ENCODE measurements at regions of chr3 and their contacts with region 1.

Region 1: DNA sequence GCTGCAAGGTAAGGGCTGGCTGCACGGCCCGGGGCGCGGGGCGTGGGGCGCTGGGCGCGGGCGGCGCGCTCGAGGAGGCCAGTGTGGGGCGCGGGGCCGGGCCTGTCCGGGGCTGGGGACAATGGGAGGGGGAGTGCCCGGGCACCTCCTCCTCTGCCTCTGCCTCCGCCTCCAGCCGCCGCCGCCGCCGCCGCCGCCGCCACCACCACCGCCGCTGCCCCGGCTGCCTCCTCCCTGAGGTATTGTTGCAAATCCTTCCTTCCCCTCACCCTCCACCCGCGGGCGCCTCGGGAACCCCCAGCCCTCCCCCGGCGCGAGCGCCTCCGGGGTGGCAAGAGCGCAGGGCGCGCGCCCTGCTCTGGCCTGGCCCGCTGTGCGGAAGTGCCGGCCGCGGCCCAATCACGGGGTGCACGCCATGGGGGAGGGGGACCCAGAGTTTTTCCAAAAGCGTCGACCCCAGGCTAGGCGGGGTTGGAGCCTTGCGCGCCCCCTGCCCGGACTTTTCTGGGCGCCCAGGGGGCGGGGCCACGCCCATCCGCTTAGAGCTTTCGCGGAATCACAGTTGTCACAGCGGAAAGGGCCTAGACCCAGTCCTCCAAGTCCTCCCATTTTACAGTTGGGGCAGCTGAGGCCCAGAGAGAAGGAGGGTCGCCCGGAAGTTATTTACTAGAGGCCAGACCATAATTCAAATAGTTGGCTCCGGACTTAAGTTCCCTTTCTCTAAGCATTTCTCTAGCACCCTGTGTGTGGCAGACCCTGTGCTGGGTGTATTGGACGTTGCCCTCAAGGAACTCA is at the start of gene LPP:
- DNase-seq: peak; percentile 96
- total RNA-seq, gene LPP: 145 TPM

Region 2: GRCh38 chr3:187694801-187695200 is 459.4 kb before region 1 on chr3:
- intact Hi-C with region 1: no loop called
- DNase-seq: no peak

Region 3: DNA sequence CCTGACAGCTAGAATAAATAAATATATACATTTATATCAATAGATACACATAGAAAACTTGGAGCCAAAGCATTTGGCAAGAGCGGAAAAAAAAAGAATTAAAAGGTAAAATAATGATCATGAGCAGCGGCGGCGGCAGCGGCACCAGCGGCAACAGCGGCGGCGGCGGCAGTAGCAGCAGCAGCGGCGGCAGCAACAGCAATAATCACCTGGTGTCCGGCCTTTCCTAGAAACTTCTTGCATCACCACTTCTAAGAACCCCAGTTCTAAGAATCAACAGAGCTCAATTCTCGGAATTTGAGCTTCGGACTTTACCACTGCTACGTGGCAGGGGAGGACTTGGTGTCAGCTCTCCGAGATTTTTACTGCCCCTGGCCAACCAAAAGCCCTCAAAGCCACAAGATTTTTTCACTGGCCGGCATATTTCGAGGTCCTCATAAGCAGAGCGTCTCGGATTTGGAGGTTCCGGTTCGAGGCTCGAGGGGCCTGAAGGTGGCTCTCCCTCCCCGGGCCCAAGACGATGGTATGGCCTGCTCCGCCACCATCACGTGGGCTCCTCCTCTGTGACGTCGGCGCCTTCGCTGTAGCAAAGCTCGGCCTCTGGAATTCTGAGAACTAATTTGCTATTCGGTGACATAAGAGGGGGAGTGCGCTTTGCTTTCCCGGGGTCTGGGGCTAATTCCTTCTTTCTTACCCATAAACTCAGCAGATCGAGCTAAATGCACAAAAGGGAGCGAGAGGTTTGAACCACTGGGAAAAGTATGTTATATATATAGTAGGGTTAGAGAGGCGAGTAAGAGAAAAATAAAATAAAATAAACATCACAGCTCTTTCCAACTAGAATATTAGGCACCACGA is 408.8 kb before region 1 on chr3 and contains the start of gene BCL6:
- intact Hi-C with region 1: loop called (anchors 2 kb)
- DNase-seq: peak; percentile 97
- total RNA-seq, gene BCL6: 67.4 TPM

Region 4: GRCh38 chr3:187963677-187964385 is 190.4 kb before region 1 on chr3:
- intact Hi-C with region 1: loop called (anchors 5 kb)
- DNase-seq: no peak

Region 5: DNA sequence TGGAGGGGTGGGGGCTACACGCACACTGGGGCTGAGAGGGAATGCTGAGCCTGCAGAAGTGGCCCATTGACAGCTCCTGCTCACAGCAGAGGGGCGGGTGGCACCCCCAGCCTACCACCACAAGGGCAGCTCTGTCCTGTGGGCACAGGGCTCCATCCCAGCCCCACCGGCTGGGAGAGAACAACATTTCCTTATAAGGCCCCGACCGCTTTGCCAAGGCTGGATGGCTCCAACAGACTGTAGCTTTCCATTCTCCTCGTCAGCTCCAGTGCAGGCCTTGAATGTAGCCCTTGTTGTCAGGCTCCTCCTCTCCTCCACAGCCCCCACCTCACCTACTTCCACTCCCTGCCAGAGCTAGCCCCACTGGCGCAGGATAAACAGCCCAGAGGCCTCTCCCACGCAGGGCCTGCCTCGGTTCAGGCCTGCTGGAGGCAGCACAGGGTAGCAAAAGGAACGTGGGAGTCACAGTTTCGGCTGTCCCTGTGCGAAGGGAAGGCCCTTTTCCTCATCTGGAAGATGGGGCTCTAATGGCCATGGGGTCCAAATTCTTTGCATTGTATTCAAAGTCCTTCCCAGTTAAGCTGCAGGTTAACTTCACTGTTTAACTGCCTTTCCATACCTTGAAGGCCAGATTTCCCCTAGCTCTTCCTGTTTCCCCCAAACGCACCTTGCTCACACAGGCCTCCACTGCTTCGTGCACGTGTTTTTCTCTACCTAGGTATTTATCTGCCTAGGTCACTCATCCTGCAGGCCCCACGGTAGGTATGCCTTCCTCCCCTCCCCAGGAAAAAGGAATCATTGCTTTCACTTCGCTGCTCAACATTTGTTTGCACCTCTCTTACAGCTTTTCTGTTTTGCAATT is 101.8 kb before region 1 on chr3:
- intact Hi-C with region 1: loop called (anchors 5 kb)
- DNase-seq: peak; percentile 87

Region 6: DNA sequence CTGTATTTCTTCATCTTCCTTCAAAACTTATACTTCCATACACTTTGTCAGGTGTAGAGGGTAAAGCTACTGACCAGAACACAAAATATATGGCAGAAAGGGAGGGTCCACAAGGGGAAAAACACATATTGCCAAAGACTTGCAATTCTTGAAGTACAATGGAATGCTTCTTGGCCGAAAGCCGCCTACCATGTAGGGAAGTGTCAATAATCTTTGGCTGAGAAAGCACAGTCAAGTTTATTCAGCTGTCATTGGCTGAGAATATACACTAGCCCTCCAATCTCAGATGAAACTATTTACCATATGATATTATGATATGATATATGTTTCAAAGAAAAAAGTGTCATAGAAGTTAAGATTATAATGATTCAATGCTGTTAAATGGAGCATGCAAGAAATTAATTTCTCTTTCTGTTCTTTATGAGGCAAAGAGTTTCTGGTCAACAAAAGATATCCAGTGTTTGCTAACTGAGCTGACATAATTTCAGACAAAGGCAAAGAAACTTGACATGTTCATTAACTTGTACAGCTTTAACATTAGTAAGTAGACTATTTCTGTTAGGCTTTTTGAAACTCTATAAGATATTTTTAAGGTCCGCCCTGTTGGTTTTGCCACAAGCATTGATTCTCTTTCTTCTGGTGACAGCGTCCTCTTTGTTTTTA is 89.2 kb before region 1 on chr3:
- intact Hi-C with region 1: no loop called
- DNase-seq: no peak

Region 7: DNA sequence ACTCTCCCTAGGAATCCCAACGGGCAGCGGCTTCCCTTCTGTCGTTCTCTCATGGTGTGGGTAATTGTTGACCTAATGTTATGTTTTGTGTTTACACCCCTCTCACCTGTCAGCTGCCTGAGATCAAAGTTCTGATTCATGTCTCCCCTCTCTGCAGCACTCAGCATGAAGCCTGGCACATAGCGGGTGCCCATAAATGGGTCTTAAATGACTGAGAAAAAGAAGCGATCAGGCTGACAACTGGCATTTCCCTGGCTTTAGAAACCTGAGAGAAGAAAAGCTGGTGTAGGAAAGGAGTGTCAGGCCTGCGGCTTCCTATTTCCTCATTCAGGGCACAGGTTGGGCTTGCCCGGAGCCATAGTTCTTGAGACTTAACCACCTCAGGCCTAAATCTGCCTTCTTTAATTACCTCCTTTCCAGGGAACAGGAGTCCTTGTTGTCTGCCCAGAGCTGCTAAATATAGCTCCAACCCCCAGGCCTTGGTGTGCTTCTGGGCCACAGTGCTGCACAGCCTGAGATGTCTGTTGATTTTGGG is 31.6 kb after region 1 on chr3:
- intact Hi-C with region 1: no loop called
- DNase-seq: no peak

Region 8: DNA sequence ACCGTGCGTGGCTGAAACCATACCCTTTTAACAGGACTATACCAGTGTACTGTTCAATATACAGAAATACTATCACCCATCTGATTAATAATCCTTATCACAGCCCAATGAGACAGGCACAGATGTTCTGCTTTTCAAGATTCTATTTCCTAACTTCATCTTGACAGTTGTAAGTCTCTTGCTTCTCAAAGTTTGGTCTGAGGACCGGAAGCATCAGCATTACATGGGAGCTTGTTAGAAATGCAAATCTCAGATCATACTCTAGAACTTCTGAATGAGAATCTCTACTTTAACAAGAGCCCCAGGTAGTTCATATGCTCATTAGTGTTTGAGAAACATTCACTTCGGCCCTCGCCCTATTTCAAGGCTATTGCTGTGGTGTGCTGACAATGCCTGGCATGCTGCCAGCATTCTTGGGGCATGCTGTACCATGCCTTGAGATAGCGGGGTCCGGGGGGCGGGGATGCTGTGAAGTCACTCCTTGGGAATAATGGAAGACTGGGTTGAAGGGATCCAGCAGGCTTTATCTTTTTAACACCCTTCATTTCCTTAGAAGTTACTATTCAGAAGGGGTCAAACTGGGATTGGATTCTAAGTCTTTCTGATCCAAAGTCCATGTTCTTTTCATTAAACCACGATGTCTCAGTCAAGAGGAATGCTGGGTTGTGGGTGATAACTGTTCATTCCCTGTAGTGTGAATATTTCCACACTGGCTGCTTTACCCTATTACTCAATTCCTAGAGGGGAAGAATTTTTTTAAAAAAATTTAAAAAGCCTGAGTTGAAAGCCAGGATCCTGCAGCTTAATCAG is 194.4 kb after region 1 on chr3:
- intact Hi-C with region 1: loop called (anchors 5 kb)
- DNase-seq: no peak

Region 9: GRCh38 chr3:188947401-188948280 is 793.4 kb after region 1 on chr3:
- intact Hi-C with region 1: loop called (anchors 5 kb)
- DNase-seq: peak; percentile 93